Activated CD4-positive, alpha-beta T cell treated with anti-CD3 and anti-CD28 coated beads, Interleukin-2, amount 10 ng/mL, durations not matched to agents 7 days and 5 days (primary cell): ENCODE measurements at regions of chr12 and their contacts with region 1.

Region 1: GRCh38 chr12:108850854-108851573 is 6.4 kb downstream of the SSH1 start:
- DNase-seq: no peak
- H3K4me3 Mint-ChIP-seq: no peak overlapping the region
- H3K27ac Mint-ChIP-seq: no peak overlapping the region
- H3K4me1 Mint-ChIP-seq: peaks cover 26% of the 10 kb centered on the region
- H3K27me3 Mint-ChIP-seq: no peaks in the 10 kb centered on the region

Region 2: DNA sequence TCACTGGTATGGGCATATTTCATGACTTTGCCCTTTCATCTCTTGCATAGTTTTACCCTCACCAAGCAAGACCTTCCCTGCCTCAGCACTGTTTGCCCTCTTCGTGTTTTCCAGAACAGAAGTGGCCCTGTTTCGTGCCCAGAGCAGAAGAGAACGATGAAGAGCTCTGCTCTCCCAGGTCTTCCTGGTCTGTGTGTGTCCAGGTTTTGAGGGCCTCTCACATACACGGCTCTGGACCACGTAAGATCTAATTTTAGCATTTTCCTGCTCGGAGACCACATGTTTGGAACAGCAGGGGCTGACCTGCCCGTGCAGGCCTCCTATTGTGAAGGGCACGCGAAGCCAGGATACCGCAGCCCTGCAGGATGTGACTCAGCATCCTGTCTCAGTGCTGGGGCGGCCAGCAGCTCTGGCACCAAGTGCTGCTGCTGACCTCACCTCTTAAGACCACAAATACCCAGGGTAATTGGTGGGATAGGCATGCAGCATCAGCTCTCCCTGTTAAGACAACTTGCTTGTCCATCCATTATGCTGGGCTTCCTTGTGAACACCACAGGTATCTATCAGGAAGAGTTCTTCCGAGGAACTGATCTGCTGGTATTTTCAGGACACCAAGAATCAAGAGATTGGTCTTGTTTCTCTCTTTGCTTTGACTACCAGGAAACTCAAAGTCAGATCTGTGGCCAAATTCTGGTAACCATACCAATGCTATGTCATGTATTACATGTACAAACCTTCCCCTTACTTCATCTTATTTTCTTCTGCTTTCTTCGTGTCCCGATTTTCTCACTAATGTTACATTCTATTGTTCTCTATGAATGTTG is 12.6 kb before region 1 on chr12:
- CTCF ChIA-PET with region 1: interaction called, 18 read pairs
- POLR2A ChIA-PET with region 1: no interaction called
- DNase-seq: peak; percentile 74
- H3K4me3 Mint-ChIP-seq: peak overlapping the region; percentile 42
- H3K27ac Mint-ChIP-seq: peak overlapping the region; percentile 93
- H3K4me1 Mint-ChIP-seq: peaks cover 57% of the 10 kb centered on the region
- H3K27me3 Mint-ChIP-seq: no peaks in the 10 kb centered on the region

Region 3: GRCh38 chr12:108879615-108880254 is 28.7 kb after region 1 on chr12 and contains the start of gene DAO:
- CTCF ChIA-PET with region 1: no interaction called
- POLR2A ChIA-PET with region 1: no interaction called
- DNase-seq: no peak
- H3K4me3 Mint-ChIP-seq: no peak within 1 kb of the TSS
- H3K27ac Mint-ChIP-seq: no peak within 1 kb of the TSS
- H3K4me1 Mint-ChIP-seq: peaks cover 10% of the 10 kb centered on the region
- H3K27me3 Mint-ChIP-seq: no peaks in the 10 kb centered on the region
- total RNA-seq, gene DAO: not detected

Region 4: GRCh38 chr12:108890212-108890611 is 39.2 kb after region 1 on chr12:
- CTCF ChIA-PET with region 1: no interaction called
- POLR2A ChIA-PET with region 1: no interaction called
- DNase-seq: peak; percentile 22
- H3K4me3 Mint-ChIP-seq: no peak overlapping the region
- H3K27ac Mint-ChIP-seq: no peak overlapping the region
- H3K4me1 Mint-ChIP-seq: no peaks in the 10 kb centered on the region
- H3K27me3 Mint-ChIP-seq: peaks cover 1% of the 10 kb centered on the region